ENCODE measurements at regions of chr14 and their contacts with region 1.

Region 1: GRCh38 chr14:87888229-87888999 is 104.6 kb downstream of the GALC start:
- DNase-seq: peak; percentile 39 to 89
- H3K4me3 ChIP-seq: no peak overlapping the region
- H3K27ac ChIP-seq: no peak overlapping the region
- H3K4me1 ChIP-seq: no peaks in the 10 kb centered on the region
- H3K27me3 ChIP-seq: no peaks in the 10 kb centered on the region
- CTCF ChIP-seq: peak; percentile 78 to 88 (median 87)
- EP300 ChIP-seq: no peak
- POLR2A ChIP-seq: no peak
- RAD21 ChIP-seq: peak; percentile 49 to 63

Region 2: DNA sequence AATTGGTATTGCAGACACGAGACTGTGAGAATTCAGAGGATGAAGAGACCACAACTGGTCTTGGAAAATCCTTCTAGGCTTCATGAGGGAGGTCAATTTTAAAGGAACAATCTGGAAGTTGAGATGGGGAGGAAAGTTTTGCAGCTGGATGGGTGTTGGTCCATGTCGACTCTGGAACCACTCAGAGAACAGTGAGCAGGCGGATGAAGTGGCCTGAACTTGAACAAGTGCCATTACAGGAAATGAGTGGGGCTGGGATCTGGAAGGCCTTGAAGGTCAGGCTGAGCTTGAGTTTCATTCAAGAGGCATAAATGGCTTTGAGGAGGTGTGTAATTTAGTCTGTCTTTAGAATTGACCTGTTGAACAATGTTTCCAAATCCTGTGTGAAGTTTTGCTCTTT is 36.3 kb before region 1 on chr14:
- CTCF ChIA-PET with region 1: no interaction called
- POLR2A ChIA-PET with region 1: no interaction called
- DNase-seq: no peak
- H3K4me3 ChIP-seq: no peak overlapping the region
- H3K27ac ChIP-seq: no peak overlapping the region
- H3K4me1 ChIP-seq: no peaks in the 10 kb centered on the region
- H3K27me3 ChIP-seq: no peaks in the 10 kb centered on the region
- CTCF ChIP-seq: no peak
- EP300 ChIP-seq: no peak
- POLR2A ChIP-seq: no peak
- RAD21 ChIP-seq: no peak

Region 3: DNA sequence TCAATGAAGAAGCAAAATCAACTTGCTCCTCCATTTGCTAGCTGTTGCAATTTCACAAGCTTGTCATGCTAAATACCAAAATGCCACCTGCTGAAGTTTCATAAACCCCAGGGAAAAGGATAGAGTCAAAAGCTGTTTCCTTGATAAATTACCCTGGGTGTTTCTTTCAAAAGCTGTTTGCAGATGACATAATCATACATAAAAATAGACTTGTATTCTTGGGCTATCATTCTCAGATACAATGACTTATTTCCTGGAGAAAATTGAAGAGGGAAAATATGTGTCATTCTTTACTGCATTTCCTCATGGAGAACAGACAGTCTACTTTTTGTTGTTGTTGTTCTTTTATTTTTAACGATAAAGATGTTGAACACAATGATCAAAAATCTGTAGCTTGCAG is 14.7 kb before region 1 on chr14:
- CTCF ChIA-PET with region 1: interaction called, 13 read pairs
- POLR2A ChIA-PET with region 1: no interaction called
- DNase-seq: no peak
- H3K4me3 ChIP-seq: no peak overlapping the region
- H3K27ac ChIP-seq: no peak overlapping the region
- H3K4me1 ChIP-seq: no peaks in the 10 kb centered on the region
- H3K27me3 ChIP-seq: no peaks in the 10 kb centered on the region
- CTCF ChIP-seq: no peak
- EP300 ChIP-seq: no peak
- POLR2A ChIP-seq: no peak
- RAD21 ChIP-seq: no peak

Region 4: GRCh38 chr14:88023658-88024187 is 135.3 kb after region 1 on chr14:
- CTCF ChIA-PET with region 1: no interaction called
- POLR2A ChIA-PET with region 1: no interaction called
- DNase-seq: no peak
- H3K4me3 ChIP-seq: no peak overlapping the region
- H3K27ac ChIP-seq: no peak overlapping the region
- H3K4me1 ChIP-seq: peaks cover 0 to 7% (median 5%) of the 10 kb centered on the region in 4 experiments; a peak in 3 of 7 replicates
- H3K27me3 ChIP-seq: no peaks in the 10 kb centered on the region
- CTCF ChIP-seq: no peak
- EP300 ChIP-seq: no peak
- POLR2A ChIP-seq: no peak
- RAD21 ChIP-seq: no peak

Region 5: GRCh38 chr14:88351966-88352691 is 463.7 kb after region 1 on chr14:
- CTCF ChIA-PET with region 1: no interaction called
- POLR2A ChIA-PET with region 1: no interaction called
- DNase-seq: no peak
- H3K4me3 ChIP-seq: no peak overlapping the region
- H3K27ac ChIP-seq: no peak overlapping the region
- H3K4me1 ChIP-seq: no peaks in the 10 kb centered on the region; a peak in 1 of 7 replicates
- H3K27me3 ChIP-seq: no peaks in the 10 kb centered on the region
- CTCF ChIP-seq: no peak
- EP300 ChIP-seq: no peak
- POLR2A ChIP-seq: no peak
- RAD21 ChIP-seq: no peak